ENCODE measurements at regions of chr18 and their contacts with region 1.

Region 1: GRCh38 chr18:4734903-4735302 is 279.8 kb upstream of the DLGAP1 start:
- DNase-seq: no peak
- ATAC-seq: no peak
- H3K4me3 ChIP-seq: no peak overlapping the region
- H3K4me3 Mint-ChIP-seq: no peak overlapping the region
- H3K27ac ChIP-seq: no peak overlapping the region
- H3K27ac Mint-ChIP-seq: no peak overlapping the region
- H3K4me1 ChIP-seq: no peaks in the 10 kb centered on the region
- H3K4me1 Mint-ChIP-seq: no peaks in the 10 kb centered on the region
- H3K27me3 ChIP-seq: no peaks in the 10 kb centered on the region
- H3K27me3 Mint-ChIP-seq: no peaks in the 10 kb centered on the region
- CTCF ChIP-seq: no peak

Region 2: DNA sequence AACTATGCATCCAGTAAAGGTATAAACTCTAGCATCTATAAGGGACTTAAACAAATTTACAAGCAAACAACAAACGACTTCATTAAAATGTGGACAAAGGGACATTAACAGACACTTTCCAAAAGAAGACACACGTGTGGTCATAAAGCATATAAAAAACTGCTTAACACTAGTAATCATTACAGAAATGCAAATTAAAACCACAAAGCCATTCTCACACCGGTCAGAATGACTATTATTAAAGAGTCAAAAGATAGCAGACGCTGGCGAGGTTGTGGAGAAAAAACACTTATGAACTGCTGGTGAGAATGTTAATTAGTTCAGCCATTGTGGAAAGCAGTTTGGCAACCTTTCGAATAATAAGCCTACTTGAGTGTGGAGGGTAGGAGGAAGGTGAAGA is 62.8 kb before region 1 on chr18:
- CTCF ChIA-PET with region 1: no interaction called
- POLR2A ChIA-PET with region 1: no interaction called
- intact Hi-C with region 1: loop called in 1 of 2 experiments (anchors 10 kb)
- DNase-seq: no peak
- ATAC-seq: no peak
- H3K4me3 ChIP-seq: no peak overlapping the region
- H3K4me3 Mint-ChIP-seq: no peak overlapping the region
- H3K27ac ChIP-seq: no peak overlapping the region
- H3K27ac Mint-ChIP-seq: no peak overlapping the region
- H3K4me1 ChIP-seq: no peaks in the 10 kb centered on the region
- H3K4me1 Mint-ChIP-seq: no peaks in the 10 kb centered on the region
- H3K27me3 ChIP-seq: no peaks in the 10 kb centered on the region
- H3K27me3 Mint-ChIP-seq: no peaks in the 10 kb centered on the region
- CTCF ChIP-seq: no peak